Activated CD4-positive, alpha-beta memory T cell treated with anti-CD3 and anti-CD28 coated beads, Interleukin-2, amount 10 ng/mL, durations not matched to agents 7 days and 5 days (primary cell): ENCODE measurements at regions of chr6 and their contacts with region 1.

Region 1: GRCh38 chr6:127907960-127908640 is 7.2 kb upstream of the THEMIS start:
- DNase-seq: no peak
- H3K4me3 Mint-ChIP-seq: peak overlapping the region; percentile 77
- H3K27ac Mint-ChIP-seq: peak overlapping the region; percentile 81
- H3K4me1 Mint-ChIP-seq: peaks cover 40% of the 10 kb centered on the region
- H3K27me3 Mint-ChIP-seq: no peaks in the 10 kb centered on the region

Region 2: DNA sequence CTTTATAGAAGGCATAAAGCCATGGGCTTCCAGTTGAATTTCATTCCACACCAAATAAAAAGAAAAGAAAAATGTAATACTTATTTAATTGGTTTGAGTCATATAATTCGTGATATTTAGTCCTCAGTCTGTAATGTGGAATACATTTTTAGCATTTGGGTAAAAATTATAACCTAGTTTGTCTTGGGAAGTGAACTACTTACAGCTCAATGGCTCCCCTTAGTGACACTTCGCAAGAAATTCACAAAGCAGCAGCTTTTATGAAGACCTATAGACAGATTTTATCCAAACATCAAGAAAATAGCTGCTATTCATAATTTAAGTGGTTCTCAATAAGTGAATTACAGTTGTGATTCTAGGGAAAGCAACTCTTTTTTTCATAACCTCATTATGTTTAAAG is 717.5 kb before region 1 on chr6:
- CTCF ChIA-PET with region 1: no interaction called
- POLR2A ChIA-PET with region 1: no interaction called
- DNase-seq: no peak
- H3K4me3 Mint-ChIP-seq: no peak overlapping the region
- H3K27ac Mint-ChIP-seq: no peak overlapping the region
- H3K4me1 Mint-ChIP-seq: no peaks in the 10 kb centered on the region
- H3K27me3 Mint-ChIP-seq: no peaks in the 10 kb centered on the region

Region 3: GRCh38 chr6:127918506-127919427 is 10.7 kb after region 1 on chr6:
- CTCF ChIA-PET with region 1: interaction called, 11 read pairs
- POLR2A ChIA-PET with region 1: interaction called, 49 read pairs
- DNase-seq: no peak
- H3K4me3 Mint-ChIP-seq: peak overlapping the region; percentile 54
- H3K27ac Mint-ChIP-seq: peak overlapping the region; percentile 62
- H3K4me1 Mint-ChIP-seq: peaks cover 74% of the 10 kb centered on the region
- H3K27me3 Mint-ChIP-seq: no peaks in the 10 kb centered on the region

Region 4: DNA sequence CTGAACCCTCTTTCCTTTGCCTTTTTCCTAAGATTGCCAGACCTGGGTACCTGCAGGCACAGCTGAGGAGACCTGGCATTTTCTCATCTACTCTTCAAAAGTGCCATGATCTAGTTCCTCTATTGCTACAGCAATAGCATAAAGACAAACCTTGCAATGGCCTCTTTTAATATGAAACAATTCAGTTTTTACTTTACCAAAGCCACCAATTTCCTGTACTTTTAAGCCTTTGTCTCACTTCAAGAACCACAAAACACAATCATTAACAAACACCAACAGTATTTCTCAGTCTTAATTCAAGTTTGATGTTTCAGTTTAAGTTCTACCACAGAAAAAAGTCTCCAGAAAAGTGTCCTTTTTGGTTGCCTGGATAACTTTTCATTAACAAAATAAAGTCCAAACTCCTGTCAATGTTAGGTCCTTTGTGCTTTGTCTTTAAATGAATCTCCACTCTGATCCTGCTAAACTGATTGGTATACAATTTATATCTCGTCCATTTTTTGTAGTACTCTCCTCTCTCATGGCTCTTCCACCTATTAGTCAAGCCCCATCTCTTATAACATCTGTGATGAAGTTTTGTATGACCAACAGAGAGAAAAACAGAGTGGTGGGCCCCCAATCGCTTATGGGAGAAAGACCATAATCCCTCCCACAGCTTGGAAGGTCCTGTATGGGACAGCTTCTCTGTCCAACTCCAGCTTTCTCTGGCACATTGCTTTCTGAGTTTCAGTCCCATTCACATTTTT is 43.2 kb after region 1 on chr6:
- CTCF ChIA-PET with region 1: no interaction called
- POLR2A ChIA-PET with region 1: interaction called, 22 read pairs
- DNase-seq: no peak
- H3K4me3 Mint-ChIP-seq: peak overlapping the region; percentile 17
- H3K27ac Mint-ChIP-seq: peak overlapping the region; percentile 94
- H3K4me1 Mint-ChIP-seq: peaks cover 56% of the 10 kb centered on the region
- H3K27me3 Mint-ChIP-seq: no peaks in the 10 kb centered on the region